ENCODE measurements at regions of chr4 and their contacts with region 1.

Region 1: GRCh38 chr4:102868781-102869568 is at the start of gene CISD2:
- DNase-seq: peak; percentile 94
- H3K4me3 ChIP-seq: peak within 1 kb of the TSS; percentile 74
- H3K27ac ChIP-seq: peak within 1 kb of the TSS; percentile 94
- H3K4me1 ChIP-seq: peaks cover 42% of the 10 kb centered on the region
- CTCF ChIP-seq: no peak
- total RNA-seq, gene CISD2: 37.6 and 41.1 TPM in 2 replicates

Region 2: DNA sequence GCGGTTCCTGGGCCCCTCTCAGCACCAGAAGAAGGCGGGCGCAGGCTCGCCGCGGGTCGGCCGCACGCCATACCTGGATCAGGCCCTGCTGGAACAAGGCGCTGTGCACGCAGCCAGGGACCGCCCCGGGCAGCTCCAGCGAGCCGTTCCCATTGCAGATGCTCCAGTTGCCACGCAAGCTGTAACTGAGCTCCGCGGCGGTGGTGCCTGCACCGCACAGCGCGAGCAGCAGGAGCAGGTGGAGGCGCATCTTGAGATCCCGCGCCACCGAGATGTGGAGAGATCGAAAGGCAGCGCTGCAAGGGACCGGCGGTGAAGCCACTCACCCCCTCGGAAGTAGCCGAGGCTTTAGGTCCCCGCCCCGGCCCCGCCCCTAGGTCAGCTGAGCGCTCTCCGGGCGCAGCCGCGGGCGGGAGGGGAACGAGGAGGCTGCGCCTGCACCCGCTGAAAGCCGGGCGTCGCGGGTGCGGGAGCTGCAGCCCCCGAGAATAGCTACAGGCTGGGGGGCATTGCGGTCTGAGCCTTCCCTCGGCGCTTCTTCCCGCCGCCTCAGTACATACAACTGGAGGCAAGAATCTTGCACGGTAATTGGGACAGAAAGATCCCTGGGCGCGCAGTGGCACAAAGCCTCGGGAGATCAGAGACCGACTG is 108.2 kb before region 1 on chr4 and contains the start of gene MANBA:
- CTCF ChIA-PET with region 1: no interaction called
- POLR2A ChIA-PET with region 1: interaction called, 4 read pairs
- intact Hi-C with region 1: loop called (anchors 2 kb)
- DNase-seq: peak; percentile 91
- H3K4me3 ChIP-seq: peak within 1 kb of the TSS; percentile 74
- H3K27ac ChIP-seq: peak within 1 kb of the TSS; percentile 40
- H3K4me1 ChIP-seq: peaks cover 17% of the 10 kb centered on the region
- CTCF ChIP-seq: no peak
- total RNA-seq, gene MANBA: 15.8 and 30.0 TPM in 2 replicates

Region 3: DNA sequence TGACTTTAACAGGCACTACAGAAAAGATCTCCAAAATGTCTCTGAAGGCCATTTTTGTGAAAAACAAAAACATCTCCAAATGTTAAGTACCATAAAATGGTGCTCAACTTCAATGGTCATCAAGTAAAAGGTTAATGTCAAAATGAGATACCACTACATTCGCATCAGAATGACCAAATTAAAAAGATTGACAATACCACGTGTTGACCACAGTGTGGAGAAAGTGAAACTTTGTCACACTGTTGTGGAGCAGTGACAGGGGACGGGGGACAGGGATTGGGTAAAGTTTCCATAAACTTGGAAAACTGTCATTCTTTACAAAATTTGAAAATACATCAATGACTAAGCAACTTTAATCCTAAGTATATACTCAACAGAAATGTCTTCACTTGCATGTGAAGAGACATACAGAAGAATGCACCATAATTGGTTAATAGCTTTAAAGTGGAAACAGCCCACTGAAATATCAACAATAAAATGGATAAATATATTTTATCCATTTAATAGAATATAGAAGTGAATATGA is 19.3 kb before region 1 on chr4:
- CTCF ChIA-PET with region 1: interaction called, 3 read pairs
- POLR2A ChIA-PET with region 1: interaction called, 10 read pairs
- intact Hi-C with region 1: no loop called
- DNase-seq: no peak
- H3K4me3 ChIP-seq: no peak overlapping the region
- H3K27ac ChIP-seq: no peak overlapping the region
- H3K4me1 ChIP-seq: no peaks in the 10 kb centered on the region
- CTCF ChIP-seq: no peak

Region 4: GRCh38 chr4:102883278-102883677 is 14.3 kb after region 1 on chr4:
- CTCF ChIA-PET with region 1: interaction called, 3 read pairs
- POLR2A ChIA-PET with region 1: interaction called, 14 read pairs
- intact Hi-C with region 1: no loop called
- DNase-seq: no peak
- H3K4me3 ChIP-seq: no peak overlapping the region
- H3K27ac ChIP-seq: no peak overlapping the region
- H3K4me1 ChIP-seq: no peaks in the 10 kb centered on the region
- CTCF ChIP-seq: no peak

Region 5: DNA sequence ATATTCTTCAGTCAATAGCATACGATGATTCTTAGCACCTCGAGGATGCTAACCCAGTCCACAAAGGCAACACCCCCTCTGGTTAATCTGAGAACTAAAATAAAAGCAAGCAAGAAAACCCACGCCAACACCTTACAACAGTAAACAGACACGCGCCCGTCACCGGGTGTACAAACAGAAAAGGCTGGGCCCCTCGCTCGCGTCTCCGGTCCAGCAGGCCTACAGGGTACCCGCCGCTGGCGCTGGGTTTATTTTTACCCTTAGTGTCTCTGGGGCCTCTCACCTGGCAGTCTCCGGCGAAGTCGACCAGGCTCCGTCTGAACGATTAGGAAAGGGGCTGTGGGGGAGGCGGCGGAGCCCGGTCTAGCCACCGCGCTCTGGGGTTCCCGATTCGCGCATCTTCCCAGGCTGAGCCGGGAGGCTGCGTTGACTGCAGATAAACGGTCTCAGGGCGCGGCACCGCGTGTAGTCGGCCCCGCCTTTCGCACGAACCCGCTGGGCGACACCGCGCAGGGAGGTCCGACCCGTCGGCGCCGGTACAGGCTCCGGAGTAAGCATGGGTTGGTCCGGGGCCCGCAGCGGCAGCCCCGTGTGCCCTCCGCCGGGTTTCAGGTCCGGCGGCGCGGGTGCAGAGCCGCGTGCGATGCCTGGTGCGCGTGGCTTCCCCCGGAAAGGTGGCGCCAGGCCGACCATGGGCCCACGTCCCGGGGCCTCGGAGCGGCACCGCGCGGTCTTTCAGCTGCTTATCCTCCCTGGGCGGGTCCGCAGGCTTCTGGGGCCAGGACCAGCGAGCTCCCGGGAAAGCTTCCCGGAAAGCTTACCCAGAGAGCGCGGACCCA is 207.1 kb after region 1 on chr4:
- CTCF ChIA-PET with region 1: no interaction called
- POLR2A ChIA-PET with region 1: interaction called, 6 read pairs
- intact Hi-C with region 1: loop called (anchors 5 kb)
- DNase-seq: peak; percentile 79
- H3K4me3 ChIP-seq: peak overlapping the region; percentile 79
- H3K27ac ChIP-seq: peak overlapping the region; percentile 86
- H3K4me1 ChIP-seq: peaks cover 51% of the 10 kb centered on the region
- CTCF ChIP-seq: peak; percentile 39; the same call in 1 of the 2 replicates

Measured in OCI-LY7 (cell line).